ENCODE measurements at regions of chr10 and their contacts with region 1.

Region 1: GRCh38 chr10:7507887-7508726 is 97.3 kb upstream of the SFMBT2 start:
- DNase-seq: peak; percentile 79
- H3K4me3 Mint-ChIP-seq: peak overlapping the region; percentile 53
- H3K27ac Mint-ChIP-seq: peak overlapping the region; percentile 98
- H3K4me1 Mint-ChIP-seq: peaks cover 60% of the 10 kb centered on the region
- H3K27me3 Mint-ChIP-seq: peaks cover 2% of the 10 kb centered on the region

Region 2: DNA sequence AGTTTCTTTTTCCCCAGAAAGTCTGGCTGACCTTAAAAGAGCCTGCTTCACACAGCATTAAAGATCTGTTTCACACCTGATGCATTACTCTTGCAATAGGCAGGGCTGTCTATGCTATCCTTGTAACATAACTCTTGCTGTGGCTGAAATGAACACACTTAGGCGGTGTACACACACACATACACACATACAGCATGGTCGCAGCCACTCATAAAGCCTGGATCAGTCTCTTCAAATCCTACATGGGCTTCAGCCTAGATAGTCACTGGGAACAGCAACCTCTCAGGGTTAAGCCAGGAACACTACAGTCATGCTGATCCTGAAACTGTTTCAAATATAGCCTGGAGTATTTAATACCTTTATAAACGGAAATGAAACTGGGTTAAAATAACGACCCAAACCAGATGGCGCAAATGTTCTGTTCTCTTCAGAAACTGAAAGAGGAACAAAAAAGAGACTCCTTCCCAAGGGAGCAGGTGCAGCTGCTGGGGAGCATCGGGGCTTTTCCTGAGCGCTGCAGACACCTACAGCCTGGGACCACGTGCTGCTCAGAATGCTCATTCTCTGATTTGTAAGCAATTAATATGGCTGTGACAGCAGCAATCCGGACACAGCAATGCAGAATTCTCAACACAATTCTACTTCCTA is 36.3 kb before region 1 on chr10:
- CTCF ChIA-PET with region 1: no interaction called
- POLR2A ChIA-PET with region 1: no interaction called
- DNase-seq: no peak
- H3K4me3 Mint-ChIP-seq: peak overlapping the region; percentile 44
- H3K27ac Mint-ChIP-seq: no peak overlapping the region
- H3K4me1 Mint-ChIP-seq: peaks cover 22% of the 10 kb centered on the region
- H3K27me3 Mint-ChIP-seq: peaks cover 12% of the 10 kb centered on the region

Region 3: GRCh38 chr10:7484456-7485243 is 23.5 kb before region 1 on chr10:
- CTCF ChIA-PET with region 1: interaction called, 6 read pairs
- POLR2A ChIA-PET with region 1: interaction called, 11 read pairs
- DNase-seq: peak; percentile 80
- H3K4me3 Mint-ChIP-seq: peak overlapping the region; percentile 26
- H3K27ac Mint-ChIP-seq: peak overlapping the region; percentile 97
- H3K4me1 Mint-ChIP-seq: peaks cover 68% of the 10 kb centered on the region
- H3K27me3 Mint-ChIP-seq: no peaks in the 10 kb centered on the region

Region 4: GRCh38 chr10:7722927-7723529 is 214.9 kb after region 1 on chr10:
- CTCF ChIA-PET with region 1: no interaction called
- POLR2A ChIA-PET with region 1: no interaction called
- DNase-seq: no peak
- H3K4me3 Mint-ChIP-seq: no peak overlapping the region
- H3K27ac Mint-ChIP-seq: no peak overlapping the region
- H3K4me1 Mint-ChIP-seq: no peaks in the 10 kb centered on the region
- H3K27me3 Mint-ChIP-seq: peaks cover 9% of the 10 kb centered on the region